ENCODE measurements at regions of chr5 and their contacts with region 1.

Region 1: DNA sequence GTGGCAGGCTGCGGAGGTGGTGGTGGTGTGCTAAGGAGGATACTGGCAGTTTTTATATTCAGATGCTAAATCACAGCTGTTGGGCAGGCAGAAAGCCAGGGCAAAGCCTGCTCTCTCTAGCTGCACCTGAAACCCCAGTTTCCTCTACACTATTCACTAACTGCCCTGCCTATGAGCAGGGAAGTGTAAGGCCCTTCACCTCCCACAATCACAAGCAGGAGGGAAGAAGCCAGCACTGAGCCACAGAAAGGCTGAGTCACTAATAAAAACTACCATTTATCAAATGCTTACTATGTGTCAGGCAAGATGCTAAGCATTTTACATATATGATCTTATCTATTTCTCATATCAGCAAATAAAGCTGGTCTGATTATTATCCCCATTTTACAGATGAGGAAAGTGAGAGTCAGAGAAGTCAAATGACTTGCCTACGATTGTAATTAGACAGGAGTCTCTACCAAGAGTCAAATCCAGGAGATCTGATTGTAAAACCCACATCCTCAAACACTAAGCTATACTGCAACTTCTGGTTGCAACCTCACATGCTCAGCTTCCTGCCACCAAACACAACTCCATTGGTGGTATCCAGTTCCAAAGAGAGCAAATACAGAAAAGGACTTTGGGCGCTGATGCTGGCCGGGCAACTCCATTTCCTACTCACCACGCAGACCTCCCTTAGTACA is 17.7 kb upstream of the IL6ST start:
- DNase-seq: peak in 8 of 14 experiments; percentile 13 to 82 (median 49)
- ATAC-seq: peak; percentile 94
- H3K4me3 ChIP-seq: no peak overlapping the region
- H3K4me3 Mint-ChIP-seq: peak overlapping the region; percentile 16
- H3K27ac ChIP-seq: peak overlapping the region; percentile 29 to 53
- H3K27ac Mint-ChIP-seq: peak overlapping the region; percentile 75
- H3K4me1 ChIP-seq: peaks cover 33% of the 10 kb centered on the region
- H3K4me1 Mint-ChIP-seq: peaks cover 43% of the 10 kb centered on the region
- H3K27me3 ChIP-seq: no peaks in the 10 kb centered on the region
- H3K27me3 Mint-ChIP-seq: no peaks in the 10 kb centered on the region
- CTCF ChIP-seq: no peak

Region 2: GRCh38 chr5:55923865-55924500 is 88.4 kb before region 1 on chr5:
- CTCF ChIA-PET with region 1: no interaction called
- POLR2A ChIA-PET with region 1: no interaction called
- intact Hi-C with region 1: no loop called
- DNase-seq: no peak
- ATAC-seq: no peak
- H3K4me3 ChIP-seq: peak overlapping the region; percentile 67
- H3K4me3 Mint-ChIP-seq: peak overlapping the region; percentile 93
- H3K27ac ChIP-seq: no peak overlapping the region
- H3K27ac Mint-ChIP-seq: no peak overlapping the region
- H3K4me1 ChIP-seq: peaks cover 22% of the 10 kb centered on the region
- H3K4me1 Mint-ChIP-seq: peaks cover 17% of the 10 kb centered on the region
- H3K27me3 ChIP-seq: no peaks in the 10 kb centered on the region
- H3K27me3 Mint-ChIP-seq: no peaks in the 10 kb centered on the region
- CTCF ChIP-seq: no peak

Region 3: GRCh38 chr5:55988979-55989638 is 23.3 kb before region 1 on chr5:
- CTCF ChIA-PET with region 1: no interaction called
- POLR2A ChIA-PET with region 1: interaction called, 114 read pairs
- intact Hi-C with region 1: loop called in 1 of 2 experiments (anchors 1 kb)
- DNase-seq: peak in 1 of 14 experiments; percentile 28
- ATAC-seq: peak; percentile 30
- H3K4me3 ChIP-seq: peak overlapping the region; percentile 25
- H3K4me3 Mint-ChIP-seq: peak overlapping the region; percentile 97
- H3K27ac ChIP-seq: peak overlapping the region in 1 of 2 donors; percentile 26
- H3K27ac Mint-ChIP-seq: peak overlapping the region; percentile 94
- H3K4me1 ChIP-seq: peaks cover 24% of the 10 kb centered on the region
- H3K4me1 Mint-ChIP-seq: peaks cover 85% of the 10 kb centered on the region
- H3K27me3 ChIP-seq: no peaks in the 10 kb centered on the region
- H3K27me3 Mint-ChIP-seq: no peaks in the 10 kb centered on the region
- CTCF ChIP-seq: no peak

Region 4: DNA sequence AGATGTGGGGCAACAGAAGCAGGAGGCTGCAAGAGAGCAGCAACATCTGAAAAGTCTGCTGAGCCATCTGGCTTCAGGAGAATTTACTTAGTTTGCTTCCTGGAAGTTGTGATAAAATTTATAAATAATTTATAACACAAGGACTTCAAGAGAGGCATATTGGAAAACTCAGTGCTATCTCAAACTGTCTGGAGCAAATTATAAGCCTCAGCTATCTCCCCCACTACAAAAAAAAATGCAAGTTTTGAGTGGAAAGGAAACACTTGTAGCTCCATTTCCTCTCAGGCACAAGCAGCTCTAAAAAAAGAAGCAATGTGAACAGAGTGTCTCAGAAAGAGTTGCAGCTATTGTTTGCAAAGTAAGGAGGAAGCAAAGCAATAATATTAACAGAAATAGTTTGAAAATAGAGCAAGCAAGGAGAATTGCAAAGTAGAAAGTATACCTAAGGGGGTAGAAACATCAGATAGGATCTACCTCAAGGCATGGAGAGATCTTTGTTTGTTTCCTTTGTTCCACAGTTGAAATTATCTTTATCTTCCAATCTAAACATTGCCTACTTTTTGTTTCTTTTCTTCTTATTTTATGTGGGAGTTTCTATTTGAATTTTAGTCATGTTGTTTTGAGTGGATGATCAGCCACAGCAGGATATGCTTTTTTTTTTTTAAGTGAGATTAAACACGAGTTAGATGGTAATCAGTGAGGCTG is 38.3 kb after region 1 on chr5:
- CTCF ChIA-PET with region 1: no interaction called
- POLR2A ChIA-PET with region 1: interaction called, 28 read pairs
- intact Hi-C with region 1: loop called in 1 of 2 experiments (anchors 5 kb)
- DNase-seq: peak in 3 of 14 experiments; percentile 37 to 56 (median 44)
- ATAC-seq: peak; percentile 73
- H3K4me3 ChIP-seq: peak overlapping the region; percentile 4
- H3K4me3 Mint-ChIP-seq: peak overlapping the region; percentile 77
- H3K27ac ChIP-seq: peak overlapping the region; percentile 40 to 54
- H3K27ac Mint-ChIP-seq: peak overlapping the region; percentile 84
- H3K4me1 ChIP-seq: peaks cover 59% of the 10 kb centered on the region
- H3K4me1 Mint-ChIP-seq: peaks cover 74% of the 10 kb centered on the region
- H3K27me3 ChIP-seq: no peaks in the 10 kb centered on the region
- H3K27me3 Mint-ChIP-seq: no peaks in the 10 kb centered on the region
- CTCF ChIP-seq: no peak

Region 5: GRCh38 chr5:56080375-56081052 is 68.1 kb after region 1 on chr5:
- CTCF ChIA-PET with region 1: no interaction called
- POLR2A ChIA-PET with region 1: no interaction called
- intact Hi-C with region 1: loop called in 1 of 2 experiments (anchors 1 kb)
- DNase-seq: peak in 1 of 14 experiments; percentile 23
- ATAC-seq: peak; percentile 40
- H3K4me3 ChIP-seq: no peak overlapping the region
- H3K4me3 Mint-ChIP-seq: peak overlapping the region; percentile 30
- H3K27ac ChIP-seq: no peak overlapping the region
- H3K27ac Mint-ChIP-seq: peak overlapping the region; percentile 82
- H3K4me1 ChIP-seq: peaks cover 29% of the 10 kb centered on the region
- H3K4me1 Mint-ChIP-seq: peaks cover 59% of the 10 kb centered on the region
- H3K27me3 ChIP-seq: no peaks in the 10 kb centered on the region
- H3K27me3 Mint-ChIP-seq: no peaks in the 10 kb centered on the region
- CTCF ChIP-seq: no peak